Endothelial cell of umbilical vein (primary cell): ENCODE measurements at regions of chr1 and their contacts with region 1.

Region 1: GRCh38 chr1:59971464-59971911 is 44.9 kb upstream of the CYP2J2 start:
- DNase-seq: peak; percentile 63
- H3K4me3 ChIP-seq: no peak overlapping the region
- H3K27ac ChIP-seq: no peak overlapping the region
- H3K4me1 ChIP-seq: peaks cover 2% of the 10 kb centered on the region
- H3K27me3 ChIP-seq: peaks cover 0 to 11% of the 10 kb centered on the region in 2 experiments
- CTCF ChIP-seq: peak; percentile 83 to 91
- POLR2A ChIP-seq: no peak

Region 2: GRCh38 chr1:59788825-59789224 is 182.7 kb before region 1 on chr1:
- CTCF ChIA-PET with region 1: no interaction called
- POLR2A ChIA-PET with region 1: no interaction called
- dilution Hi-C with region 1: no loop called
- intact Hi-C with region 1: no loop called
- DNase-seq: no peak
- H3K4me3 ChIP-seq: no peak overlapping the region
- H3K27ac ChIP-seq: no peak overlapping the region
- H3K4me1 ChIP-seq: no peaks in the 10 kb centered on the region
- H3K27me3 ChIP-seq: no peaks in the 10 kb centered on the region
- CTCF ChIP-seq: no peak
- POLR2A ChIP-seq: no peak

Region 3: DNA sequence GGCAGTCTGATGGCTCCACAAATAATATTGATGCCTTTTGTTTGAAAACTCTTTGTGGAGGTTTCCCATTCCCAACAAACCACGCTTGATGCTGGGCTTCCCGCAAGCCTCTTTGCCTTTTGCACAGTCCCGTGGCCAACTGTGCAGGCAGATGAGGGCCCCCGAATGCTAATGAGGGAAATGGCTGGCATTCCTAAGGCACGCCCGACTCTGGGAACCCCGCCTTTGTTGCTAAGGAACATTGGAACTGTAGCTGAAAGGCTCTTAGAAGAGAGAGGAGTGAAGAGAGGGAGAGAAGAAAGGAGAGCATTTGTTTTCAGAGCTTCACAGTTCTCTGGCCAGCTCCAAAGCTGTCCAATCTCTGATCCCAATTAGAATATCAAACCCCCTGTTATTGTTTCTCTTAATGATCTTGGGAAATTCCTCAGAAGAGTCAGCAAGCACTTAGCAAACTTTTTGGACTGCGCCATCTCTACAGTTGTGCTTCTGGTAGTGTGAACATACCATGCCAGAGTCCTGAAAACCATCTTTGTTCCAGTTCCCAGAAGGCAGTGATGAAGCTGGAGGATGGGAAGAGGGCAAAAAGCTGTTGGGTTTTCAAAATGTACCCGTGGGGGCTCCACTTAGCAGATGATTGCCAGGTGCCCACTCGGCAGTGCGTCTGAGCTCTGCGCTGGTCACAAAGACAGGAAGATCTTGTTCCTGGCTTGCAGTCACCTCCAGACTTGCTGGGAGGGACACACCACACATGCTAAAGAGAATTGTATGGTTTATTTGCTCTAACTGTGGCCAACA is 15.2 kb after region 1 on chr1:
- CTCF ChIA-PET with region 1: interaction called, 40 read pairs
- POLR2A ChIA-PET with region 1: no interaction called
- dilution Hi-C with region 1: no loop called
- intact Hi-C with region 1: no loop called
- DNase-seq: no peak
- H3K4me3 ChIP-seq: no peak overlapping the region
- H3K27ac ChIP-seq: no peak overlapping the region
- H3K4me1 ChIP-seq: no peaks in the 10 kb centered on the region
- H3K27me3 ChIP-seq: peaks cover 2 to 3% of the 10 kb centered on the region in 2 experiments
- CTCF ChIP-seq: no peak
- POLR2A ChIP-seq: no peak

Region 4: GRCh38 chr1:60108196-60108595 is 136.7 kb after region 1 on chr1:
- CTCF ChIA-PET with region 1: no interaction called
- POLR2A ChIA-PET with region 1: no interaction called
- dilution Hi-C with region 1: no loop called
- intact Hi-C with region 1: no loop called
- DNase-seq: no peak
- H3K4me3 ChIP-seq: no peak overlapping the region
- H3K27ac ChIP-seq: no peak overlapping the region
- H3K4me1 ChIP-seq: no peaks in the 10 kb centered on the region
- H3K27me3 ChIP-seq: no peaks in the 10 kb centered on the region
- CTCF ChIP-seq: no peak
- POLR2A ChIP-seq: no peak

Region 5: DNA sequence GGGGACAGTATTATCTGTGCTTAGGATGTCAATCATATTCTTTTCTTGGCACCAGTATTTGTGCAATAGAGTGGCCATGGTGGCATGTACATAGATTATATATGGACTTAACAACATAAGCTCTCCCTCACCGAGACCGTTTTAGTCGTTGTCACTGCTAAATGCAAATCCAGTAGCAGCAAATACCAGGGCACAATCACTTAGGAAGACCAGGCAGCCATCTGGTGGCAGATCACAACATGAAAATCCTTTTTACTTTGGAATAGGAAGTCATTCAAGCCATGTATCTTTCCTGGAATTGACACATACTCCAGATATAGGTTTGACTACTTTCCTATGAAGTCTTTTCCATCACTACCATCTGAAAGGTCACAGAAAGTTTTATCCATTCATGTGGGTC is 155.2 kb after region 1 on chr1:
- CTCF ChIA-PET with region 1: interaction called, 4 read pairs
- POLR2A ChIA-PET with region 1: no interaction called
- dilution Hi-C with region 1: no loop called
- intact Hi-C with region 1: loop called (anchors 2 kb)
- DNase-seq: no peak
- H3K4me3 ChIP-seq: no peak overlapping the region
- H3K27ac ChIP-seq: no peak overlapping the region
- H3K4me1 ChIP-seq: no peaks in the 10 kb centered on the region
- H3K27me3 ChIP-seq: no peaks in the 10 kb centered on the region
- CTCF ChIP-seq: no peak
- POLR2A ChIP-seq: no peak

Region 6: GRCh38 chr1:60153961-60154360 is 182.5 kb after region 1 on chr1:
- CTCF ChIA-PET with region 1: interaction called, 5 read pairs
- POLR2A ChIA-PET with region 1: no interaction called
- dilution Hi-C with region 1: no loop called
- intact Hi-C with region 1: loop called (anchors 2 kb)
- DNase-seq: no peak
- H3K4me3 ChIP-seq: no peak overlapping the region
- H3K27ac ChIP-seq: no peak overlapping the region
- H3K4me1 ChIP-seq: no peaks in the 10 kb centered on the region
- H3K27me3 ChIP-seq: no peaks in the 10 kb centered on the region
- CTCF ChIP-seq: no peak
- POLR2A ChIP-seq: no peak

Region 7: DNA sequence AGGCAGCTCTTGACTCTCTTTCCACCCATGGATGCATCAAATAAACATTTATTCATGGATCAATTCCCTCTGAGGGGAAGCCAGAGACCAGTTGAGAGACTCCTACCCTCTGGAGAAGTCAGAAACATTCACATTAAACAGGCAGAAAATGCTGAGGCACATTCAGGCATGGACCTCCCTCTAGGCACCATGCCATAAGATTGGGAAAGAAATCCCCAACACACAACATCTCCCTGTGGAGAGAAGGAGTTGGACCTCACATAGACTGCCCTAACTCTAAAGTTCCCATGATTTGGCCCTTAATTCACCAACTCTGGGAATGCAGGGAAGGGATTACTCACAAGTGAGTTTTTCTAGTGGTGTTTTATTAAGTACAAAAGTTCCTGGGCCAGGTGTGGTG is 517.4 kb after region 1 on chr1:
- CTCF ChIA-PET with region 1: no interaction called
- POLR2A ChIA-PET with region 1: no interaction called
- dilution Hi-C with region 1: no loop called
- intact Hi-C with region 1: no loop called
- DNase-seq: no peak
- H3K4me3 ChIP-seq: no peak overlapping the region
- H3K27ac ChIP-seq: no peak overlapping the region
- H3K4me1 ChIP-seq: no peaks in the 10 kb centered on the region
- H3K27me3 ChIP-seq: no peaks in the 10 kb centered on the region
- CTCF ChIP-seq: no peak
- POLR2A ChIP-seq: no peak

Region 8: GRCh38 chr1:60969971-60970509 is 998.6 kb after region 1 on chr1:
- CTCF ChIA-PET with region 1: interaction called, 3 read pairs
- POLR2A ChIA-PET with region 1: no interaction called
- dilution Hi-C with region 1: no loop called
- intact Hi-C with region 1: loop called (anchors 2 kb)
- DNase-seq: peak; percentile 57
- H3K4me3 ChIP-seq: no peak overlapping the region
- H3K27ac ChIP-seq: no peak overlapping the region
- H3K4me1 ChIP-seq: peaks cover 5% of the 10 kb centered on the region
- H3K27me3 ChIP-seq: no peaks in the 10 kb centered on the region
- CTCF ChIP-seq: peak in 1 of 2 donors; percentile 21
- POLR2A ChIP-seq: no peak

Region 9: GRCh38 chr1:60978421-60979357 is 1007.2 kb after region 1 on chr1:
- CTCF ChIA-PET with region 1: interaction called, 11 read pairs
- POLR2A ChIA-PET with region 1: no interaction called
- dilution Hi-C with region 1: no loop called
- intact Hi-C with region 1: no loop called
- DNase-seq: peak; percentile 69
- H3K4me3 ChIP-seq: no peak overlapping the region
- H3K27ac ChIP-seq: no peak overlapping the region
- H3K4me1 ChIP-seq: peaks cover 6% of the 10 kb centered on the region
- H3K27me3 ChIP-seq: no peaks in the 10 kb centered on the region
- CTCF ChIP-seq: peak; percentile 60 to 77
- POLR2A ChIP-seq: no peak